PC-9 (cell line): ENCODE measurements at regions of chr1 and their contacts with region 1.

Region 1: GRCh38 chr1:200674838-200675587 is 5.3 kb upstream of the DDX59 start:
- DNase-seq: no peak
- H3K4me3 ChIP-seq: no peak overlapping the region
- H3K27ac ChIP-seq: no peak overlapping the region
- H3K4me1 ChIP-seq: peaks cover 11% of the 10 kb centered on the region
- H3K27me3 ChIP-seq: no peaks in the 10 kb centered on the region
- CTCF ChIP-seq: no peak

Region 2: DNA sequence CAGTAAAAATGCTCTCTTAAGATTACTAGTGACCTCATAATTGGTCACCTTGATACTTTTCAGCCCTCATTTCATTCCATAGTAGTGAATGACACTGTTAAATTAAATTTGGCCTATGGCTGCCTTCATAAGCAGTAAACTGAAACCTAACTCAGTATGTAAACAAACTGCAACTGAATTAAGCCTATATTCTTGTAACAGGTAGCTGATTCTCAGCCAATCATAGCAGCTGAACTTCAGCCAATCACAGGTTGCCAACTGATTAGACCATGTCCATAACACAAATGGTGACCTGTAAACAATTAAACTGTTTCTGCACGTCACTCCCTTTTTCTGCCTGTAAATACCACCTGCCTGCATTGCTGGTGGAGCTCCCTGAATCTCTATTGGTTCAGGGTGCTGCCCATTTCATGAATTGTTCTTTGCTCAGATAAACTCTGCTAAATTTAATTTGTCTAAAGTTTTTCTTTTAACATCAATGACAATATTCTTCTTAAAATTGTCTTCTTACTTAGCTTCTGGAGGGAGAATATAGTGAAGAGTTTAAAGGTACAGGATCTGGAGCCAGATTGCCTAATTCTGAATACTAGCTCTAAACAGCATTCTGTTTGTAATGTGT is 39.7 kb after region 1 on chr1:
- CTCF ChIA-PET with region 1: no interaction called
- POLR2A ChIA-PET with region 1: interaction called, 5 read pairs
- intact Hi-C with region 1: loop called (anchors 5 kb)
- DNase-seq: no peak
- H3K4me3 ChIP-seq: no peak overlapping the region
- H3K27ac ChIP-seq: no peak overlapping the region
- H3K4me1 ChIP-seq: no peaks in the 10 kb centered on the region
- H3K27me3 ChIP-seq: no peaks in the 10 kb centered on the region
- CTCF ChIP-seq: no peak